Panc1 (cell line): ENCODE measurements at regions of chr13 and their contacts with region 1.

Region 1: GRCh38 chr13:95624020-95624419 is 20.5 kb downstream of the DZIP1 start:
- DNase-seq: peak; percentile 10
- ATAC-seq: peak; percentile 77
- H3K4me3 ChIP-seq: no peak overlapping the region
- H3K27ac ChIP-seq: no peak overlapping the region
- H3K4me1 ChIP-seq: no peaks in the 10 kb centered on the region
- H3K27me3 ChIP-seq: no peaks in the 10 kb centered on the region
- CTCF ChIP-seq: peak; percentile 80

Region 2: DNA sequence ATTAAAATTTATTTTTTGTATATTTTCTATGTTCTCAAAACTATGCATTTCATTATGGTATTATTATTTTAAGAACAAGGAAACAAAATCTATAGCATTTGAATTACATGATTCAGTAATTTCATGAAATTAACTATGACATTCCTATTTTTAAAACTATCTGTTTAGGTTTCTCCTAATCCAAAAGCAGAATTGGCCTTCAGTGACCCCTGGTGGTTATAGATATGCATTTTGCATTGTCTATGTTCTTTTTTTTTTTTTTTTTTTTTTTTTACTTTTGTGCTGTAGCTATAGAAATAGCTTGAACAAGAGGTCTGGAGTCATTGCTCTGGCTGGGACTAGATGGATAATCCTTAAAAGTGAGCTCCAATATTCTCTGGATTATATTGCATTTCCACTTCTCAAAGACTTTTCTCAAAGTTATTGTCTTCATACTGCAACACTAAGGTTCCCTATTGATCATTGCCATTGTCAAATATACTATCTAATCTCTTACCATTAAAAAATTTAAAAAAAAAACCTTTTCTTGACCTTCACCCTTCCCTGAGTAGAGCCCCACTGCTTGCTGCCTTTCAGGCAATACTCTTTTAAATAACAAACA is 37.1 kb after region 1 on chr13:
- CTCF ChIA-PET with region 1: interaction called, 13 read pairs
- POLR2A ChIA-PET with region 1: no interaction called
- in situ Hi-C with region 1: no loop called
- intact Hi-C with region 1: loop called (anchors 5 kb)
- DNase-seq: no peak
- ATAC-seq: no peak
- H3K4me3 ChIP-seq: no peak overlapping the region
- H3K27ac ChIP-seq: no peak overlapping the region
- H3K4me1 ChIP-seq: no peaks in the 10 kb centered on the region
- H3K27me3 ChIP-seq: no peaks in the 10 kb centered on the region
- CTCF ChIP-seq: peak; percentile 57; the same call in 1 of the 2 replicates